RWPE1 (cell line): ENCODE measurements at regions of chr1 and their contacts with region 1.

Region 1: GRCh38 chr1:62082456-62083363 is 111.9 kb upstream of the L1TD1 start:
- DNase-seq: peak; percentile 48
- H3K27ac ChIP-seq: no peak overlapping the region
- CTCF ChIP-seq: peak; percentile 96

Region 2: GRCh38 chr1:61950418-61950817 is 132.3 kb before region 1 on chr1:
- CTCF ChIA-PET with region 1: no interaction called
- POLR2A ChIA-PET with region 1: no interaction called
- DNase-seq: peak; percentile 39
- H3K27ac ChIP-seq: no peak overlapping the region
- CTCF ChIP-seq: peak; percentile 32

Region 3: DNA sequence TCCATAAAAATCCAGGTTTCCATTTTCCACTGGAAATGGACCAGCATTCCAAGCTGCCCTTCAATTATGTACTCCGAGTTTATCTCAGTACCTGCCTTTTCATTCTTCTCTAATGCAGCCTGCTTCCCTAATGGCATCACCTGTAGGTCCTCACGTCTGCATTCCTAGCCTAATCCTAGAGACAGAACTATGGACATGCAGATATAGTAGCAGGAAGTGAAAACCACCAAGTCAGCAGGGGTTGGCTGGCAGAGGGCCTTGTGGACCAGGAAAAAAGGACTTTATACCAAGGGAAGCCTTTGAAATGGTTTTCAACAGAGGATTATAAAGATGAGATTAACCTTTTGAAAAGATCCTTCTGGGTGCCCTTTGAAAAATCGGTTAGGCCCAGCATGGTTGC is 23.8 kb before region 1 on chr1:
- CTCF ChIA-PET with region 1: no interaction called
- POLR2A ChIA-PET with region 1: no interaction called
- DNase-seq: no peak
- H3K27ac ChIP-seq: no peak overlapping the region
- CTCF ChIP-seq: no peak

Region 4: GRCh38 chr1:62097464-62097863 is 14.8 kb after region 1 on chr1:
- CTCF ChIA-PET with region 1: interaction called, 11 read pairs
- POLR2A ChIA-PET with region 1: no interaction called
- DNase-seq: no peak
- H3K27ac ChIP-seq: no peak overlapping the region
- CTCF ChIP-seq: no peak